Left lung (tissue), 14 donors: ENCODE measurements at regions of chr1 and their contacts with region 1.

Region 1: DNA sequence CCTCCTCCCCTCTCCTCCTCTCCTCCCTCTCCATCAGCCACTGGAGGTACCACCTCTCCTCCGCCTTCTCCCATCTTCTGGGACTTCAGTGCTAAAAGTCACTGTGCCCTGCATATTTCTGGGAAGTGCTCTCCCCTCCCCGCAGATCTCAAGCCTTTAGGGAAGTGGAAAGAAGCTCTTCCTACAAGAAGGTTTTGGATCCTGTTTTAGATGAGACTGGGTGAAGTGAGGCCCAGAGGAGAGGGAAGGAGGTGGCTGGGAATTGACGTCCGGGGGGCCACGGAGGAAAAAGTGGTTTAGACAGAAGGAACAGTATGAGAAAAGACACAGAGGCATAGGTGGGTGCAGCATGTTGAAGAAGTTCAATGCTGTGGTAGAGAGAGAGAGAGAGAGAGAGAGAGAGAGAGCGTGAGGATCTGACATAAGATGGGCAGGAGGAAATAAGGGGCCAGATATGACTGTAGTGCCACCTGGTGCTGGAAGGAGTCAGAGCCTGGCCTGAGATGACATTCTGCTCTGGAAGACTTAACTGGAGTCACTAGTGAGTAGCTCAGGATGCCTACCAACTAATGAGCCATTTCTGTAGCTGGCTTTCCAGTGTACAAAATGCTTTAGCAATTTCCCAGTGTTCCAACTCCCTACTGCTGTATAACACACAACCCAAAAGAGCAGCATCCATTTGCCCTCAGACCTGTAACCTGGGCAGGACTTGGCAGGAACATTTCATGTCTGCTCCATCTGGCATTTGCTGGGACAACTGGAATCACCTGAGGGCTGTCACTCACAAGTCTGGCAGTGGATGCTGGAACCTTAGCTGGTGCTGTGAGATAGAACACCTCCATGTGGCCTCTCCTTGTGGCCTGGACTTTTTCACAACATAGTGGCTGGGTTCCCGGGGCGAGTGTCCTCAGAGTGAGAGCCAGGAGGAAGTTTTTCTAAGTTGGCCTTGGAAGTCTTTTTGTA is 16.6 kb upstream of the ZSCAN20 start:
- DNase-seq: peak in 2 of 4 donors; percentile 27 to 52
- ATAC-seq: peak; percentile 93
- H3K4me3 ChIP-seq: no peak overlapping the region
- H3K27ac ChIP-seq: no peak overlapping the region
- H3K4me1 ChIP-seq: peaks cover 0 to 27% of the 10 kb centered on the region in 2 donors
- H3K27me3 ChIP-seq: no peaks in the 10 kb centered on the region
- CTCF ChIP-seq: peak in 1 of 2 donors; percentile 36

Region 2: GRCh38 chr1:33378976-33379375 is 76.8 kb before region 1 on chr1:
- intact Hi-C with region 1: loop called in 1 of 2 experiments (anchors 10 kb)
- DNase-seq: no peak
- ATAC-seq: peak; percentile 57
- H3K4me3 ChIP-seq: no peak overlapping the region
- H3K27ac ChIP-seq: peak overlapping the region in 1 of 2 donors; percentile 19
- H3K4me1 ChIP-seq: peaks cover 8 to 29% of the 10 kb centered on the region in 2 donors
- H3K27me3 ChIP-seq: no peaks in the 10 kb centered on the region
- CTCF ChIP-seq: no peak